MCF 10A (cell line): ENCODE measurements at regions of chrX and their contacts with region 1.

Region 1: GRCh38 chrX:16786139-16786790 is at the start of gene TXLNG:
- DNase-seq: peak; percentile 100
- H3K4me3 Mint-ChIP-seq: peak within 1 kb of the TSS; percentile 89
- H3K27ac Mint-ChIP-seq: peak within 1 kb of the TSS; percentile 75
- H3K4me1 Mint-ChIP-seq: no peaks in the 10 kb centered on the region
- H3K27me3 Mint-ChIP-seq: no peaks in the 10 kb centered on the region
- CTCF ChIP-seq: no peak
- total RNA-seq, gene TXLNG: 32.4 and 43.2 TPM in 2 replicates

Region 2: DNA sequence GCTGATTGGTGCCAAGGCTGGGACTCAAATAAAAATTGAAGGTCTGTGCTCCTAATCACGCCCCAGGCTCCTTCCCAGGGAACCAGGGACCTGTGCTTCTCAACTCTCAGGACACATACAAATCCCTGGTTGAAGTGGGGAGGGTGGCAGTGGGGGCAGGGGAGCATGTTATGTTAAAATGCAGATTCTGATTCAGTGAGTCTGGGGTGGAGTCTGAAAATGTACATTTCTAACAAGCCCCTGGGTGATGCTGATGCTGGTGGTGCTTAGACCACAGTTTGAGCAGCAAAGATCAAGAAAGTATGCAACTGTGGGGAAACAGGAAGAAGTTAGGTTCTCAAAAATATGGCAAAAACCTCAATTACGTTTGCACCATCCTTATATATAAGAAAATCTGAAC is 382.5 kb before region 1 on chrX:
- CTCF ChIA-PET with region 1: no interaction called
- POLR2A ChIA-PET with region 1: no interaction called
- intact Hi-C with region 1: no loop called
- DNase-seq: no peak
- H3K4me3 Mint-ChIP-seq: no peak overlapping the region
- H3K27ac Mint-ChIP-seq: no peak overlapping the region
- H3K4me1 Mint-ChIP-seq: peaks cover 5% of the 10 kb centered on the region
- H3K27me3 Mint-ChIP-seq: peaks cover 27% of the 10 kb centered on the region
- CTCF ChIP-seq: no peak

Region 3: DNA sequence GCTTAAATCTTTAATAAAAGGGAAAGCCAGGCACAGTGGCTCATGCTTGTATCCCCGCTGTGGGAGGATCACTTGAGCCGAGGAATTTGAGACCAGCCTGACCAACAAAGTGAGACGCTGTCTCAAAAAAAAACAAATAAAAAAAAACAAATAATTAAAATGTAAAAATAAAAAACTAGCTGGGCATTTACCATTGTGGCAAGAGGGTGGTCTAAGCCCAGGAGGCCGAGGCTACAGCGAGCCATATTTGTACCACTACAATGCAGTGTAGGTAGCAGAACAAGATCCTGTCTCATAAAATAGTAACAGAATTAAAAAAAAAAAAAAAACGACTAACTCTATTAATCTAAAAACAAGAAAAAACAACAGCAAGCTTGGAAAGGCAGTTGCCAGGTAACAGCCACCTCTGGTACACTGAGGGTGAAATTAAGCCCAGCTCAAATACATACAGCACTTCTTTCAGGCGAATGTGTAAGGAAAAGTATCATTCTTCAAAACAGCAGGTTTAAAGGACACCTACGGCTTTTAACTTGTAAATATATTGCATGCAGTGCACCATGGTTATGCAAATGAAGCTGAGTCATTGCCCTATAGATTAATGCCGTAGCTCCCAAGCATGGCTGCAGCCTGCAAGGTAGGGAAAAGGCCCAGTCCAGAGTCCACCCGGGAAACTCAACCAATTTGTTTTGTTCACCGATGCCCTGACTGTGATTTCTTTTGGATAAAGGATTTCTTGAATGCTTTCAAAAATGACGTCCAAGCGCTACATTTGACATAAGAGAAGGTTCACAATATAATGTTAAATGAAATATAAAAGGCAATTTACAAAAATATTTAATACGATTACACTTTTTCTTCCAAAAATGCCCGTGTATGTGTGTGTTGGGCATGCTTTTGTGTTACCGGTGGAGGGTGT is 14.5 kb before region 1 on chrX:
- CTCF ChIA-PET with region 1: interaction called, 6 read pairs
- POLR2A ChIA-PET with region 1: interaction called, 10 read pairs
- intact Hi-C with region 1: no loop called
- DNase-seq: peak; percentile 82
- H3K4me3 Mint-ChIP-seq: no peak overlapping the region
- H3K27ac Mint-ChIP-seq: peak overlapping the region; percentile 95
- H3K4me1 Mint-ChIP-seq: no peaks in the 10 kb centered on the region
- H3K27me3 Mint-ChIP-seq: no peaks in the 10 kb centered on the region
- CTCF ChIP-seq: no peak

Region 4: GRCh38 chrX:16807548-16807947 is 21.3 kb after region 1 on chrX:
- CTCF ChIA-PET with region 1: interaction called, 5 read pairs
- POLR2A ChIA-PET with region 1: interaction called, 12 read pairs
- intact Hi-C with region 1: no loop called
- DNase-seq: peak; percentile 40
- H3K4me3 Mint-ChIP-seq: peak overlapping the region; percentile 69
- H3K27ac Mint-ChIP-seq: peak overlapping the region; percentile 49
- H3K4me1 Mint-ChIP-seq: peaks cover 12% of the 10 kb centered on the region
- H3K27me3 Mint-ChIP-seq: no peaks in the 10 kb centered on the region
- CTCF ChIP-seq: peak; percentile 23